Activated naive CD4-positive, alpha-beta T cell treated with anti-CD3 and anti-CD28 coated beads for 36 hours (primary cell): ENCODE measurements at regions of chr14 and their contacts with region 1.

Region 1: DNA sequence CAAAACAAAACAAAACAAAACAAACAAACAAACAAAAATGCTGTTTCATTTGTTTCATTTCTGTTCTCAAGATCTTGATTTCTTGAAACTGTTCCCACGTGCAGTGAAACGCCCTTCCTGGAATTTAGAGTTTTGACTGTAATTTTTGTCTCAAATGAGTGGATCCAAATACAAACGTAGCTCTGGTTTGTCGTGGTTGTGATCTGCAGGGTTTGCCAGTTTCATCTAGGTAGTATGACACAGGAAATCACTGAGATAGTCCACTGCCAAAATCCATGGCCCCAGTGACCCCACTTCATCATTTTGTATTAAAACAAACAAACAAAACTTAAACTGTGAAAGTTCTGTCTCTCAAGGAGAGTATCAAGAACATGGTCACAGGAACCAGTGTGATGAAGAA is 838.6 kb downstream of the BCL11B start:
- DNase-seq: peak; percentile 40
- H3K4me3 Mint-ChIP-seq: peak overlapping the region; percentile 3
- H3K27ac Mint-ChIP-seq: peak overlapping the region; percentile 28
- H3K4me1 Mint-ChIP-seq: peaks cover 22% of the 10 kb centered on the region
- H3K27me3 Mint-ChIP-seq: no peaks in the 10 kb centered on the region

Region 2: DNA sequence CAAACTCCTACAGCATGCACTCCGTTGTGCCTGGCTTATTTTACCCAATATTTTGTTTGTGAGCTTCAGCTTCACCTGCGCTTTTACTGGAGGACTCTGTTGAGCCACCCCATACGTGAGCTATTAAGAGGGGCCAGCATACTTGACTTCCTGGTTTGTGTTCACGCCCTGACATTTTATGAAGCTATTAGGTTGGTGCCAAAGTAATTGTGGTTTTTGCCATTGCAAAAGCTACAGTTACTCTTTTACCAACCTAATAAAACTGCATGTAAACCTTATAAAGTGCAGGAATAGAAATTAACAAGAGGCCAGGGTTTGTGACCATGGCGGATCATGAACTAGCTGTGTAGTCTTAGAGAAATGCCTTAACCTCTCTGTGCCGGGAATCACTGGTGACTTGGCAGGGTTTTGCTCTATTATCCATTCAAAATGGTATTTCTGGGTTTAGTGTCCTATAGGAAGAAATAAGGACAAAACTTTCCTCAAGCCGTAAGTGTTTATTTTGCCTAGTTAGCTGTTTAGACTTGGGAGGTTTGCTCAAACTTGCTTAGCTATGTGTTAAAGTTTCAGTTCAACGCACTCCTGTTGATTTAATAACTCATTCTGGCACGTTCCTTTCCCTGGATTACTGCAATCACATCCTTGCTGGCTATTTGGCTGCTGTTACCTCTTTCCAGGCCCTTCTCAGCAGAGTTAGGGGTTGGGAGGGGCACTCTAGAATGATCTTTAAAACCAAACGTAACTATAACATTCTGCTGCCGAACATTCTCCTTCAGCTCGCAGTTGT is 189.1 kb before region 1 on chr14:
- CTCF ChIA-PET with region 1: no interaction called
- intact Hi-C with region 1: loop called (anchors 5 kb)
- DNase-seq: no peak
- H3K4me3 Mint-ChIP-seq: no peak overlapping the region
- H3K27ac Mint-ChIP-seq: no peak overlapping the region
- H3K4me1 Mint-ChIP-seq: peaks cover 3% of the 10 kb centered on the region
- H3K27me3 Mint-ChIP-seq: no peaks in the 10 kb centered on the region